GM10248 (cell line): ENCODE measurements at regions of chr2 and their contacts with region 1.

Region 1: DNA sequence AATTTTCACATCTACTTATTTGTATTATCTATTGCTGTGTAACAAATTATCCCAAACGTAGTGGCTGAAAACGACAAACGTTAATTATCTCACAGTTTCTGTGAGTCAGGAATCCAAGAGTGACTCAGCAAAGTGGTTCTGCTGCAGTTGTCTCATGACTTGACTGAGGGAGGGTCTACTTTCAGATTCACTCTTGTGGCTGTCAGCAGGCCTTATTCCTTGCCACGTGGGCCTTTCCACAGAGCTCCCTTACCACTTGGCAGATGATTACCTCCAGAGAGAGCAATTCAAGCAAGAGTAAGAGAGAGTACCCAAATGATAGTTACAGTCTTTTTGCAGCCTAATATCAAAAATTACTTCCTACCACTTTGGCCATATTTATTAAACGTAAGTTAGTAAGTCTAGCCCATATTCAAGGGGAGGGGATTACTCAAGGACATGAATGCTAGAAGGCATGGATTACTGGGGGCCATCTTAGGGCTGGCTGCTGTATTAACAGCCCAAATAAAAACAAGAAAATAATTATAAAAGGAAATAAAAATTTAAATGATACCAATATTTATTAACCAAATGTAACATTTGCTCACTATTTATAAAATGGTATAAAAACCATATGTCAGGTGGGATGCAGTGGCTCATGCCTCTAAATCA is 48.7 kb upstream of the NBEAL1 start:
- DNase-seq: peak; percentile 44
- CTCF ChIP-seq: no peak

Region 2: GRCh38 chr2:203328760-203329540 is 363.0 kb after region 1 on chr2:
- CTCF ChIA-PET with region 1: no interaction called
- POLR2A ChIA-PET with region 1: interaction called, 11 read pairs
- DNase-seq: peak; percentile 76
- CTCF ChIP-seq: no peak